ENCODE measurements at regions of chr2 and their contacts with region 1.

Region 1: GRCh38 chr2:30711646-30712085 is 95.6 kb downstream of the CAPN13 start:
- DNase-seq: peak; percentile 88
- H3K4me3 ChIP-seq: no peak overlapping the region
- H3K27ac ChIP-seq: peak overlapping the region in 2 of 8 donors; percentile 22 to 73
- H3K4me1 ChIP-seq: peaks cover 0 to 43% (median 19%) of the 10 kb centered on the region in 6 donors
- H3K27me3 ChIP-seq: no peaks in the 10 kb centered on the region
- CTCF ChIP-seq: peak; percentile 95 to 100 (median 98)
- POLR2A ChIP-seq: no peak

Region 2: DNA sequence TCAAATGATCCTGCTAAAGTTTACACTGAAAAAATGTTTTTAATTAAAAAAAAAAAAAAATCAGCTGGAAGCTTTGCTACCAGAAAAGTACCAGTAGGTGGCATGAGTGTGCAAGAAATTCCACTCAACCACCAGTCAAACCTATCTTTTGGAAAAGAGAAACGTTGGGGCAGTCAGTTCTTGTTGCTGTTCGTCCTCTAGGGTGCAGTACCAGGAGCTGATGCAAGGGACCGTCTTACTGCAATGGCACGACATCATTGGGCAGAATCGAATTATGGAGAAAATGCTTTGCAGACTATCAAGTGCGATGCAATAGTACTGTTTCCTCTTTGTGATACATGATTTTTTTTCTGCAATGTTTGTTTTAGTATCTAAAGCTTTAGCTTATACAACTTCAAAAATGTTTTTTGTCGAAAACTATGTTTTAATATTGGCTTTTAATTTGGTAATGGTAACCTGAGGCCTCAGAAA is 546.6 kb before region 1 on chr2:
- intact Hi-C with region 1: loop called (anchors 2 kb)
- DNase-seq: no peak
- H3K4me3 ChIP-seq: no peak overlapping the region
- H3K27ac ChIP-seq: no peak overlapping the region
- H3K4me1 ChIP-seq: peaks cover 0 to 35% (median 9%) of the 10 kb centered on the region in 6 donors
- H3K27me3 ChIP-seq: no peaks in the 10 kb centered on the region
- CTCF ChIP-seq: peak; percentile 66 to 94 (median 87)
- POLR2A ChIP-seq: no peak

Region 3: GRCh38 chr2:30213326-30213725 is 498.3 kb before region 1 on chr2:
- intact Hi-C with region 1: loop called (anchors 5 kb)
- DNase-seq: no peak
- H3K4me3 ChIP-seq: no peak overlapping the region
- H3K27ac ChIP-seq: no peak overlapping the region
- H3K4me1 ChIP-seq: peaks cover 4 to 25% (median 18%) of the 10 kb centered on the region in 6 donors
- H3K27me3 ChIP-seq: no peaks in the 10 kb centered on the region
- CTCF ChIP-seq: no peak
- POLR2A ChIP-seq: no peak

Region 4: DNA sequence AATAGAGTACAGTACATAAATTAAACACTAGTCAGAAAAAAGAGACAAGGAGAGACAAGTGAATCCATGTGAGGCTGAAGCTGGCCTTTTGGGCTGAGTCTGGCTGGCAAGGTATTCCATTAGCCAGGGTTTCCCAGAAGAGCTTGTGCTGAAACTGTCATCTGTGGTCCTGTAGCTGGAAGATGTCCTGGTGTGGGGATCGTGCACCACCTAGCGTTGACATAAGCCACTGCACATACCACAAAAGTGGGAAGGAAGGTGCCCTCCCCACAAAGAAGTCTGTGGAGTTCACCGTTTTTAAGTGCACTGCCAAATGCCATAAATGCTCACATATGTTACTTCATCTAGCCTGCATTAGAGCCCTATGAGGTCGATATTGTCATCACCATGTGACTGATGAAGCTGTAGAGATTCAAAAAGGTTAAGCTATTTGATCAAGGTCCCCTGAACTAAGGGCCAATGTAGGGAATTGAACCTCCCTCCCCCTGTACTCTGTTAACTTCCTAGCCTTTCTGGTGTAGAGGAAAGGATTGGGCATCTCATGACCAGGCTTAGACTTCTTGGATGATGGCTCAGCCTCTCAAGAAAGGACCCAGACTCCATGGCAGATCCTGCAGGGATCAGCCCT is 458.5 kb after region 1 on chr2:
- intact Hi-C with region 1: loop called (anchors 2 kb)
- DNase-seq: peak; percentile 80
- H3K4me3 ChIP-seq: no peak overlapping the region
- H3K27ac ChIP-seq: no peak overlapping the region
- H3K4me1 ChIP-seq: peaks cover 0 to 4% (median 0%) of the 10 kb centered on the region in 6 donors
- H3K27me3 ChIP-seq: no peaks in the 10 kb centered on the region
- CTCF ChIP-seq: peak; percentile 80 to 92 (median 89)
- POLR2A ChIP-seq: no peak

Region 5: DNA sequence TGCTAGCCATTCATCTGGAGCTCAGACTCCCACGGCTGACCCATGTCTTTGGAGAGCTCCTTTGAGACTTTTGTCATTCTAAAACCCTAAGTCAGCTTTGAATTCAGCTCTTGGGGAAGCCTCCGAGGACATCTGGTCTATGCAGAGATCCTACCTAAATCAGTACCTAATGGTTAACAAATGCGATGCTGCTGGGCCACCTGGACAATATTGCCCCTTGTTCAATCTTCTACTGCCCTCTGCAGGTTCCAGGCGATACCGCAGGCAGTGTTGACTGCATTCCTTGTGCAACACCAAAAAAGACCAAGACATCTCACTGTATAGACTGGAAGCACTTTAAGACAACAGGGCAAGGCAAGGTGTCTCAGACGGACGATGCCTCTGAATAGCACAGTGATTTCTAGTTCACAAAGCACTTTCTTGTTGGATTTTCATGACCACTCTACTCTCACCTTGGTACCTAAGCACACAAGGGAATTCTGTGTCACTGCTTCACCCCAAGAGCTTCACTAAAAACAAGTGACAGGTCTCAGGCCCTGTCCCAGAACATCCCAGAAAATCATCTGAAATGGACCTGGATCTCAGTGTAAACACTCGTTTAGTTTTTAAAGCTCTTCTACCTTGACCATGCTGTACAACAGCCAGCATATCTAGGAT is 622.0 kb after region 1 on chr2:
- intact Hi-C with region 1: loop called (anchors 5 kb)
- DNase-seq: peak; percentile 90
- H3K4me3 ChIP-seq: no peak overlapping the region
- H3K27ac ChIP-seq: no peak overlapping the region
- H3K4me1 ChIP-seq: peaks cover 0 to 5% (median 2%) of the 10 kb centered on the region in 6 donors
- H3K27me3 ChIP-seq: peaks cover 0 to 8% (median 0%) of the 10 kb centered on the region in 7 donors
- CTCF ChIP-seq: peak; percentile 89 to 97 (median 95)
- POLR2A ChIP-seq: no peak